Naive thymus-derived CD4-positive, alpha-beta T cell (primary cell): ENCODE measurements at regions of chr11 and their contacts with region 1.

Region 1: DNA sequence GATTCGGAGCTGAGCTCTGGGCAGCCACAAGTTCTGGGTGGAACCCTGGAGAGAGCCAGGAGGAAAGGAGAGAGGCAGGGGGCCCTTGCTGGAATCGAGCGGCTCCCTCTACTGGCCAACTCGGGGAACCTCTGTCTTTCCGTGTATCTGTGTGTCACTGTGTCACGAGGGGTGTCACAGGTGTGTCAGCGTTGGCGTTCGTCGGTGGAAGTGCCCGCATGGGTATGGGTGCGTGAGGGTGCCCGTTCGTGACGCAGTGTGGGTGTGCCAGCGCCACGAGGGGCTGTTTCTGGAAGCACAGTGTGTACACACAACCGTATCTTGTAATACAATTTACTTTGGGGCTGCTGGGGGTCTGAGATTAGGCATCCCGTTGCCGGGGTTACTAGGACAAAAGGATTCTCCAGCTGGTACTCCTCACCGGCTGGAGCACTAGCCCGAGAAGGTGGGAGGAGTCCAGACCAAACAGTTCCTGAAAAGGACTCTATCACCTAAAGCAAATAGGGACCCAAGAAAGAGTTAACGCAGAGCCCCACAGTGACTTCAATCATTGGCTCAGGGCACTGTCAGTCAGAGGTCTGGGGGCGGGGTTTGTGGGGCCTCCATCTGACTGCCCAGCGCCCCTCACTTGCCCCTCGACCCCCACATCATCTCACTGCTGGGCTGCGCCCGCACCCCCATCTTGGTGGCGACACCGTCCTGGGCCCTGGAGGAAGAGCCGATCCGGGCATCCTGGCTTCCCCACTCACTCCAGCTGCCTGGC is 2.6 kb upstream of the BCL9L start:
- DNase-seq: peak; percentile 89 to 99 (median 97)
- ATAC-seq: peak; percentile 79
- H3K4me3 ChIP-seq: peak overlapping the region; percentile 81
- H3K4me3 Mint-ChIP-seq: peak overlapping the region; percentile 86 to 98 (median 95)
- H3K27ac ChIP-seq: peak overlapping the region; percentile 96
- H3K27ac Mint-ChIP-seq: peak overlapping the region; percentile 93 to 100 (median 99)
- H3K4me1 ChIP-seq: peaks cover 25 to 34% of the 10 kb centered on the region in 2 donors
- H3K4me1 Mint-ChIP-seq: peaks cover 30 to 56% (median 46%) of the 10 kb centered on the region in 7 donors
- H3K27me3 ChIP-seq: no peaks in the 10 kb centered on the region
- H3K27me3 Mint-ChIP-seq: peaks cover 0 to 2% (median 0%) of the 10 kb centered on the region in 5 donors

Region 2: GRCh38 chr11:118435893-118436624 is 492.2 kb before region 1 on chr11 and contains the start of gene KMT2A:
- CTCF ChIA-PET with region 1: no interaction called
- POLR2A ChIA-PET with region 1: no interaction called
- intact Hi-C with region 1: loop called (anchors 5 kb)
- DNase-seq: peak; percentile 89 to 100 (median 96)
- ATAC-seq: peak; percentile 94
- H3K4me3 ChIP-seq: peak within 1 kb of the TSS; percentile 91
- H3K4me3 Mint-ChIP-seq: peak within 1 kb of the TSS; percentile 89 to 97 (median 96)
- H3K27ac ChIP-seq: peak within 1 kb of the TSS; percentile 99
- H3K27ac Mint-ChIP-seq: peak within 1 kb of the TSS; percentile 91 to 99 (median 95)
- H3K4me1 ChIP-seq: peaks cover 24 to 28% of the 10 kb centered on the region in 2 donors
- H3K4me1 Mint-ChIP-seq: peaks cover 36 to 45% (median 38%) of the 10 kb centered on the region in 7 donors
- H3K27me3 ChIP-seq: no peaks in the 10 kb centered on the region
- H3K27me3 Mint-ChIP-seq: peaks cover 0 to 8% (median 0%) of the 10 kb centered on the region in 5 donors
- total RNA-seq, gene KMT2A: 140 to 192 (median 161) TPM

Region 3: GRCh38 chr11:118462178-118462577 is 466.1 kb before region 1 on chr11:
- CTCF ChIA-PET with region 1: no interaction called
- POLR2A ChIA-PET with region 1: no interaction called
- intact Hi-C with region 1: no loop called
- DNase-seq: no peak
- ATAC-seq: no peak
- H3K4me3 ChIP-seq: no peak overlapping the region
- H3K4me3 Mint-ChIP-seq: peak overlapping the region in 2 of 10 donors; percentile 23 to 29
- H3K27ac ChIP-seq: no peak overlapping the region
- H3K27ac Mint-ChIP-seq: peak overlapping the region in 2 of 9 donors; percentile 62 to 75
- H3K4me1 ChIP-seq: peaks cover 3 to 11% of the 10 kb centered on the region in 2 donors
- H3K4me1 Mint-ChIP-seq: peaks cover 20 to 67% (median 55%) of the 10 kb centered on the region in 7 donors
- H3K27me3 ChIP-seq: no peaks in the 10 kb centered on the region
- H3K27me3 Mint-ChIP-seq: no peaks in the 10 kb centered on the region

Region 4: GRCh38 chr11:118699506-118700220 is 228.6 kb before region 1 on chr11:
- CTCF ChIA-PET with region 1: no interaction called
- POLR2A ChIA-PET with region 1: interaction called, 12 read pairs
- intact Hi-C with region 1: loop called in 1 of 2 experiments (anchors 2 kb)
- DNase-seq: peak in 7 of 9 donors; percentile 78 to 92 (median 88)
- ATAC-seq: peak; percentile 96
- H3K4me3 ChIP-seq: peak overlapping the region; percentile 20
- H3K4me3 Mint-ChIP-seq: peak overlapping the region; percentile 33 to 85 (median 80)
- H3K27ac ChIP-seq: peak overlapping the region; percentile 66
- H3K27ac Mint-ChIP-seq: peak overlapping the region; percentile 79 to 99 (median 98)
- H3K4me1 ChIP-seq: peaks cover 44 to 66% of the 10 kb centered on the region in 2 donors
- H3K4me1 Mint-ChIP-seq: peaks cover 14 to 83% (median 56%) of the 10 kb centered on the region in 7 donors
- H3K27me3 ChIP-seq: no peaks in the 10 kb centered on the region
- H3K27me3 Mint-ChIP-seq: no peaks in the 10 kb centered on the region

Region 5: GRCh38 chr11:118895142-118896039 is 32.9 kb before region 1 on chr11:
- CTCF ChIA-PET with region 1: interaction called, 10 read pairs
- POLR2A ChIA-PET with region 1: interaction called, 8 read pairs
- intact Hi-C with region 1: loop called in 1 of 2 experiments (anchors 1 kb)
- DNase-seq: peak; percentile 54 to 87 (median 81)
- ATAC-seq: peak; percentile 86
- H3K4me3 ChIP-seq: peak overlapping the region; percentile 22
- H3K4me3 Mint-ChIP-seq: peak overlapping the region; percentile 76 to 86 (median 81)
- H3K27ac ChIP-seq: peak overlapping the region; percentile 94
- H3K27ac Mint-ChIP-seq: peak overlapping the region; percentile 94 to 99 (median 97)
- H3K4me1 ChIP-seq: peaks cover 64 to 67% of the 10 kb centered on the region in 2 donors
- H3K4me1 Mint-ChIP-seq: peaks cover 59 to 78% (median 71%) of the 10 kb centered on the region in 7 donors
- H3K27me3 ChIP-seq: no peaks in the 10 kb centered on the region
- H3K27me3 Mint-ChIP-seq: no peaks in the 10 kb centered on the region

Region 6: DNA sequence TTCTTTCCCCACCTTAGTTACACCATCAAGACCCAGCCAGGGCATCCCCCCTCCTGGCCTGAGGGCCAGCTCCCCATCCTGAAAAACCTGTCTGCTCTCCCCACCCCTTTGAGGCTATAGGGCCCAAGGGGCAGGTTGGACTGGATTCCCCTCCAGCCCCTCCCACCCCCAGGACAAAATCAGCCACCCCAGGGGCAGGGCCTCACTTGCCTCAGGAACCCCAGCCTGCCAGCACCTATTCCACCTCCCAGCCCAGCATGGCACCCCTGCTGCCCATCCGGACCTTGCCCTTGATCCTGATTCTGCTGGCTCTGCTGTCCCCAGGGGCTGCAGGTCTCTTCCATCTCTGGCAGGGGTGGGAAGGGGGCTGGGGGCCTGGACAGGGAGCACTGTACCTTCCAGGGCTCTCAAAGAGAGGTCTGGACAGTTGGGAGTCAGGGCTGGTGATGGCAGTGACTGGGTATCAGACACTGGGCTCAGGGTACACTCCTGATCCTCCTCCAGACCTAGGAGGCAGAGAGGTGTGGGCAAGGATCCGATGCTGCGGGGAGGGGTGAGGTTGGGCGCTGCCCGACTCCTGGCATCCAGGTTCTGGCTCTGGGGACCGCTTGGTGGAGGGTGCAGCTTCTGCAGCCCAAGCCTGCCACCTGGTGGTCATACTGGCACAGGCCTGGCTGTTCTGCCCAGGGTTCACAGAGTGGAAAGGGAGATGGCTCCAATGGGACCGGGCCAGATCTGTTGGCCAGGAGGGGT is 28.0 kb after region 1 on chr11 and contains the start of gene UPK2:
- CTCF ChIA-PET with region 1: interaction called, 5 read pairs
- POLR2A ChIA-PET with region 1: interaction called, 3 read pairs
- intact Hi-C with region 1: loop called (anchors 1 to 2 kb)
- DNase-seq: peak; percentile 74 to 91 (median 83)
- ATAC-seq: peak; percentile 99
- H3K4me3 ChIP-seq: no peak within 1 kb of the TSS
- H3K4me3 Mint-ChIP-seq: peak within 1 kb of the TSS in 1 of 10 donors; percentile 49
- H3K27ac ChIP-seq: no peak within 1 kb of the TSS
- H3K27ac Mint-ChIP-seq: peak within 1 kb of the TSS in 8 of 9 donors; percentile 2 to 77 (median 54)
- H3K4me1 ChIP-seq: no peaks in the 10 kb centered on the region
- H3K4me1 Mint-ChIP-seq: peaks cover 0 to 11% (median 5%) of the 10 kb centered on the region in 7 donors
- H3K27me3 ChIP-seq: no peaks in the 10 kb centered on the region
- H3K27me3 Mint-ChIP-seq: peaks cover 0 to 31% (median 0%) of the 10 kb centered on the region in 5 donors
- total RNA-seq, gene UPK2: 0.24 TPM in 1 of 5 experiments, not detected in the others

Region 7: DNA sequence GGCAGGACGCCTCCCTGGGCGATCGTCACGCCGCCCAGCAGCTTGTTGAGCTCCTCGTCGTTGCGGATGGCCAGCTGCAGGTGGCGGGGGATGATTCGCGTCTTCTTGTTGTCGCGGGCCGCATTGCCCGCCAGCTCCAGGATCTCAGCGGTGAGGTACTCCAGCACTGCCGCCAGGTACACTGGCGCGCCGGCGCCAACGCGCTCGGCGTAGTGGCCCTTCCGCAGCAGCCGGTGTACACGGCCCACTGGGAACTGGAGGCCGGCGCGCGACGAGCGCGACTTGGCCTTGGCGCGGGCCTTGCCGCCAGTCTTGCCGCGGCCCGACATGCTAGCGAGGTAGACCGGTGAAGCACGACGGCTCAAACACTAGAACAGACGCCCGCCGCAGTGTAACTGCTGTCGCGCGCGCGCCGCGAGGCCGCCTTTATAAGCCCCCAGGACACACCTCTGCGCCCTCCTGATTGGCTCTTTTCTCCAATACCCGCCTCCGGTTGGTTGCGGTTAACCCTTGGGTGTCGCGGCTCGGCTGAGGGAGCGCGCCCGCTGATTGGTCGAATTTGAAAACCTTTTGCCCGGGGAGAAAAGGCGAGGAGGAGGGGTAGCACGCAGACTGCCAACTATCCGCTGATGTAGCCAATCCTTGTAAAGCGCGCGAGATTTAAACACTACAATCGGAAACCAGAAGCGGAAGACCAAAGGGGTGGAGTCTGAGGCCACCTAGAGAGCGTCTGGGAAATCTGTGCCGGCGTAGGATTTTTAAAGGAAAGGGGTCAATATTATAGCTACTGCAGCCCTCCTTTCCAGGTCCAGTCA is 167.0 kb after region 1 on chr11:
- CTCF ChIA-PET with region 1: no interaction called
- POLR2A ChIA-PET with region 1: interaction called, 3 read pairs
- intact Hi-C with region 1: loop called (anchors 2 to 5 kb)
- DNase-seq: peak; percentile 96 to 100 (median 100)
- ATAC-seq: peak; percentile 93
- H3K4me3 ChIP-seq: peak overlapping the region; percentile 94
- H3K4me3 Mint-ChIP-seq: peak overlapping the region; percentile 90 to 97 (median 93)
- H3K27ac ChIP-seq: peak overlapping the region; percentile 75
- H3K27ac Mint-ChIP-seq: peak overlapping the region; percentile 82 to 96 (median 88)
- H3K4me1 ChIP-seq: peaks cover 11 to 23% of the 10 kb centered on the region in 2 donors
- H3K4me1 Mint-ChIP-seq: peaks cover 20 to 67% (median 37%) of the 10 kb centered on the region in 7 donors
- H3K27me3 ChIP-seq: no peaks in the 10 kb centered on the region
- H3K27me3 Mint-ChIP-seq: peaks cover 0 to 3% (median 0%) of the 10 kb centered on the region in 5 donors